Posterior vena cava (tissue), 2 donors: ENCODE measurements at regions of chr2 and their contacts with region 1.

Region 1: DNA sequence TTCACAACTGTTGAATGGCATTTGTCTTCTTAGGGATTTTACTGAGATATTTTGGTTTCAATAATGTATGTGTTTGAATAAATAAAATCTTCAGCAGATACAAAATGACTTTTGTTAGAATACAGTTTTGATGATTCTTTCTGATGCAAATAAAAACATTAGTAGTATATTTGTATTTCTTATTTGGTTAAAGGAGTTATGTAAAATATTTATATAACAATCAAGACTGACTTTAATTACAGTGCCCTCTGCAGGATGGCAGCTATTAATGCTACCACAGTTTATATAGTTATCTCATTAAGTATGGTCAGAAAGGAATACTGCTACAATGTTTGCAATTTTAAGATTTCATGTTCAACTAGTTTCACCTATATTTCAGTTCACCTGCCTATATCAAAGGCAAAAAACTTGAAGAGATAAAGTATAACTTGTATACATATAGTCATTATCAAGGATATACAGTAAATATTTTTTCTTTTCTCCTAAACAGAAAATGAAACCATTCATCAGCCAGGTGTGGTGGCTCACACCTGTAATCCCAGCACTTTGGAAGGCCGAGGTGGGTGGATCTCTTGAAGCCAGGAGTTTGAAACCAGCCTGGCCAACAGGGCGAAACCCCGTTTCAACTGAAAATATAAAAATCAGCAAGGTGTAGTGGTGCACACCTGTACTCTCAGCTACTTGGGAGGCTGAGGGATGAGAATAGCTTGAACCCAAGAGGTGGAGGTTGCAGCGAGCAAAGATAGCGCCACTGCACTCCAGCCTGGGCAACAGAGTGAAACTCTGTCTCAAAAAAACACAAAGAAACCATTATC is 19.8 kb downstream of the ARL5A start:
- DNase-seq: no peak

Region 2: GRCh38 chr2:151691631-151692030 is 116.8 kb before region 1 on chr2:
- intact Hi-C with region 1: loop called in 1 of 2 experiments (anchors 10 kb)
- DNase-seq: no peak

Region 3: GRCh38 chr2:152175458-152176325 is 367.2 kb after region 1 on chr2 and contains the start of gene STAM2:
- intact Hi-C with region 1: no loop called
- DNase-seq: peak; percentile 97
- total RNA-seq, gene STAM2: 40.9 to 50.8 TPM